Natural killer cell (primary cell): ENCODE measurements at regions of chr1 and their contacts with region 1.

Region 1: DNA sequence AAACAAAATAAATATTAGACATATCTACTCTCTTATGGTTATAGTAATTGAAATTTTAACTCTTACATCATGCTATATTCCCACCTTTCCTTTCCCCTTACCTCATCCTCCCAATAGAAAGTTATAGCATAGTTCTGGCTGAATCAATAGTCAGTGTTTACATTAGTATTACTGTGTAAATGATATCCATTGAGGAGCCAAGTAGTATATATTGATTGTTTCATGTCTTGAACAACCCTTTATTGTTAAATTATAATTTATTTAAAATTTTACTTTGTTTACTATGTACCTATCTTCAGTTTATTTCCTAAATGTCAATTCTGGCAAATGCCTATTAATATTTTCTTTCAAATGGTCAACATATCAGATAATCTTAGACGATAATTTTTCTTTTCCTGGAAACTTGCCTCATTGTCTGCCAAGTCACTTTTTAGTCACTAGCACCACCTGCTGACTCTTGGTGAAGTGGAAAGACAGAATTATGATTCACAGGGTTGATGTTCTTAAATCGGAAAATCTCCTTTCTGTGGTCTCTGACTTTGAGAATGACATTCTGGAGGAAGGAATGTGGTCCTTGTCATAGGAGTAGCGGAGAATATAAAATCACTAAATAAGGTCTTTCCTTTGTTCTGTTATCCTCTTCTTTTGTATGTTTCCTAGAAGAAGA is 8.7 kb downstream of the HJV start:
- DNase-seq: peak; percentile 31 to 87
- ATAC-seq: peak; percentile 74 to 86 (median 82)
- H3K4me3 ChIP-seq: no peak overlapping the region
- H3K4me3 Mint-ChIP-seq: no peak overlapping the region
- H3K27ac ChIP-seq: no peak overlapping the region
- H3K27ac Mint-ChIP-seq: no peak overlapping the region
- H3K4me1 ChIP-seq: peaks cover under 1% of the 10 kb centered on the region
- H3K4me1 Mint-ChIP-seq: peaks cover 0 to 6% of the 10 kb centered on the region in 2 donors
- H3K27me3 ChIP-seq: no peaks in the 10 kb centered on the region
- H3K27me3 Mint-ChIP-seq: peaks cover 5 to 13% of the 10 kb centered on the region in 2 donors
- CTCF ChIP-seq: peak; percentile 89

Region 2: DNA sequence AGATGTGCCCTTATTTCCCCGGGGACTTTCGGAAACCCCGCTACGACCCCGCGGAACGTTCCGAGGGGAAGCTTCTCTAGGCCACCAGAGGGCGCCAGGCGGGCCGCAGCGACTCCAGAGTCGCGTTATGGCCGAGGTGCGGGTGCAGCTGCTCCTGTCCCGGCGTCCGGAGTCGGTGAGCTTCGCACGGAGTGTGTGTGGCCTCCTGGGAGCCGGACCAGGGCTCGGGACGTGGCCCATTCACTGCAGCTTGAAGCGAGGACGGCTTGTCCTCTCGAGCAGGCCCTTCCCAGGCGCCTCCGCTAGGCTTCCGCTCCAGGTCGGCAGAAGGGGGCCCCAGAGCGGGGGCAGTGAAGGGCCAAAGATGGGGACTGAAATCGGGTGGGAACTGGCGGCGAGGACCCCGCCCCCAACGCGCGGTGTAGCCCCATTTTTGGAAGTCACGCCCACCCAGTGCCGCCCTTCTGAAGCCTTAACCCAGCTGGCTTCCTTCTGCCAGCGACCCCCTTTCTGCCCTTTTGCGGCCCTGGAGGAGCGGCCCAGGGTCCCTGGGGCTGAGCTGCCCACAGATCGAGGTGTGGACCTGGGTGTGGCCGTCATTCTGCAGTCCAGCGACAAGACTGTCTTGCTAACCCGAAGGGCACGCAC is 167.2 kb before region 1 on chr1 and contains the start of gene NUDT17:
- intact Hi-C with region 1: loop called (anchors 1 kb)
- DNase-seq: peak; percentile 74 to 88
- ATAC-seq: peak; percentile 86 to 89 (median 87)
- H3K4me3 ChIP-seq: peak within 1 kb of the TSS; percentile 68
- H3K4me3 Mint-ChIP-seq: no peak within 1 kb of the TSS
- H3K27ac ChIP-seq: peak within 1 kb of the TSS; percentile 44
- H3K27ac Mint-ChIP-seq: no peak within 1 kb of the TSS
- H3K4me1 ChIP-seq: peaks cover 20% of the 10 kb centered on the region
- H3K4me1 Mint-ChIP-seq: no peaks in the 10 kb centered on the region
- H3K27me3 ChIP-seq: no peaks in the 10 kb centered on the region
- H3K27me3 Mint-ChIP-seq: no peaks in the 10 kb centered on the region
- CTCF ChIP-seq: peak; percentile 88
- total RNA-seq, gene NUDT17: 3.3 to 4.9 (median 3.4) TPM

Region 3: DNA sequence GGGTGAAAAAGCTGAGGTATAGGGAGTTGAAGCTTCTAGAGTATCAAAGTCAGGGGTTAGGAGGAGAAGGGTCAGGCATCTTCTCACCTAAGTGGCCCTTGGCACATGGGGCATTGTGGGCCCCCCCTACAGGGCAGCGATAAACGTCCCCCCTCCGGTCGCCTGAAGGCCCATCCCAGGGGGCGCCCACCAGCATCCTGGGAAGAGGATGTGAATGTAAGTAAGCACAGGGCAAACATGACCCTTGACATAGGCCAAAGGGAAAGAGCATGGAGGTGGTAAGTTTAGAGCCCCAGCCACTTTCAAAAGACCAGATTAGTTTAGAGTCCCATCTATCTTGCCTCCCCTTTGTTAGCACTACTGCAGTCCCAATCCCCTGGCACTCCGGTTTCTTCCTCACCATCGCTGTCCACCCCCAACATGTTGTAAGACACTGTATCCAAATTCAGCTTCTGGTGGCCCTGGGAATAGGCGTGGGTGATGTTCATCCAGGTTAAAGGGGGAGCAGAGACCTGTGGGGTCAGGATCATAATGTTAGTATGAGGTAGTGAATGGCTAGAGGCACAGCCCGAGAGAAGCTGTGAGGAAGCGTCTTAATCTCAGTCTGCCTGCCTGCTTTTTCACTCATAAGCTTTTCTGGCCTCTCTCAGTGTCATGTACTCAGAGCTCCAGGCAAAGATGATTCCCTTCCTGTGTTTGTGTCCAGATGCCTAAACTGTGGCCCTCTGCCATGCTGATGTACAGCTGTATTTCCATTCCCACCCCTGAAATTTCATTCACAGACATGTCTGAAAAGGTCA is 105.7 kb before region 1 on chr1:
- intact Hi-C with region 1: loop called (anchors 2 kb)
- DNase-seq: no peak
- ATAC-seq: no peak
- H3K4me3 ChIP-seq: no peak overlapping the region
- H3K4me3 Mint-ChIP-seq: no peak overlapping the region
- H3K27ac ChIP-seq: no peak overlapping the region
- H3K27ac Mint-ChIP-seq: no peak overlapping the region
- H3K4me1 ChIP-seq: peaks cover 3% of the 10 kb centered on the region
- H3K4me1 Mint-ChIP-seq: peaks cover 0 to 5% of the 10 kb centered on the region in 2 donors
- H3K27me3 ChIP-seq: no peaks in the 10 kb centered on the region
- H3K27me3 Mint-ChIP-seq: no peaks in the 10 kb centered on the region
- CTCF ChIP-seq: no peak

Region 4: DNA sequence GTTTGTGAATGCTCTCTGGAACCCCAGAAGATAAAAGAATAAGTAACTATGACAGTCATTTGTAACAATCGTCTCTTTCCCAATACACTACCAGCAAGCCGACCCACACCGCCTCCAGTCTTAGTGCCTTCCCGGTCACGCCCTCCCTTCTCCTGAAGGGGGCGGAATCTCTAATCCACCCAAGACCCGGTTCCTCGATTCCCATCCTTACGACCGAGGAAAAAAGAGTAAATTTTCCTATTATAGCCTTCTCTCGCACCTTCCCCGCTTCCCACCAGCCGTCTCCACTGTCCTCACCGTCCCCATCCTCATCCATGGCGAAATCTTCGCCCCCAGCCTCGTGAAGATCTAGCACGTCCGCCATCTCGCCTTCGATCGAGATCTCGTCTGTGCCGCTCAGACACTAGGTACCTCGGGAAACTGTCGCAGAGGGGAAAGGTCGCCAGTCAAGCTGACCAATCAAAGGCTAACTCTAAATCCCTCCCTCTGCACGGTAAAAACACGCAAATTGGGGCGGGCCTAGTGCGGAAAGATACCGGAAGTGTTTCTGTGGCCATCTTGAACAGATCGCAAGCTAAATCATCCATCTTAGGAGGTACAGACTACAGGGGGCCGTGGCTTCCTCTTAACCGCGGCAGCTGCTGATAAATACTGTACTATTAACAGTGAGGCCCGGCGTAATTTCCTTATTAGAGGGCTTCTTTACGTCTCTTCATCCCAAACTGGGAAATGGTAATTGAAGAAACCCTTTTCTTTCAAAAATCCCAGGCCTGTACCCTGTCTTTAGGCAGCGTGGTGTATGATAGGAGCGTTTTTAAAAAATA is 85.6 kb before region 1 on chr1 and contains the start of gene RBM8A:
- intact Hi-C with region 1: loop called (anchors 5 kb)
- DNase-seq: peak; percentile 87 to 99
- ATAC-seq: peak; percentile 96 to 99 (median 96)
- H3K4me3 ChIP-seq: peak within 1 kb of the TSS; percentile 64
- H3K4me3 Mint-ChIP-seq: no peak within 1 kb of the TSS
- H3K27ac ChIP-seq: peak within 1 kb of the TSS; percentile 100
- H3K27ac Mint-ChIP-seq: no peak within 1 kb of the TSS
- H3K4me1 ChIP-seq: peaks cover 25% of the 10 kb centered on the region
- H3K4me1 Mint-ChIP-seq: peaks cover 14 to 20% of the 10 kb centered on the region in 2 donors
- H3K27me3 ChIP-seq: no peaks in the 10 kb centered on the region
- H3K27me3 Mint-ChIP-seq: no peaks in the 10 kb centered on the region
- CTCF ChIP-seq: peak; percentile 73
- total RNA-seq, gene RBM8A: 172 to 204 (median 200) TPM

Region 5: DNA sequence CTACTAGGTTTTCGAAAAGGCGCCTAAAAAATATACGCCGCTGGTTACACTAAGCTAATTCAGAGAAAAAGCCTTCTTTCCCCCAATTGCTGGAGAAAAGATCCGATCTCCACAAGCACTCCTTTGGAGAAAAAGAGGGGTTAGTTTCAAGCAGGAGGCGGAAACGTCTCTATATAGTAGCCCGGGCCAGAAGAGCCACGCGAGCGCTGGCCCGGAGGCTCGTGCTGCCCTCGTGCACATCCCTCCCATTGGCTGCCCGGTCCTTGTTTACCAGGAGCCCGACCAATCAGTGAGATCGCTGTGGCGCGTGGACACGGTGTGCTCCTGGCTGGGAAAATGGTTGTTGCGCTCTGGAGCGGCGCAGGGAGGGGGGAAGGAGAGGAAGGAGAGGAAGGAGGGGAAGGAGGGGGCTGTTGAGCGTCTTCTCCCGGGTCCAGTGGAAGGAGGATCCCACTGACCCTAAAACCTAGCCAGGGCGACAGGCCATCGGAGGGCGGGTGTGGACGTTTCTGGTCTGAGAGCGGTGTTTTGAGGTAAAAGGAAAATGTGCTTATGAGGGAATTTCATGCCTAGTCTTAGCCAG is 16.3 kb before region 1 on chr1 and contains the start of gene TXNIP:
- intact Hi-C with region 1: loop called (anchors 2 kb)
- DNase-seq: peak; percentile 91 to 95
- ATAC-seq: peak; percentile 85 to 97 (median 95)
- H3K4me3 ChIP-seq: peak within 1 kb of the TSS; percentile 64
- H3K4me3 Mint-ChIP-seq: peak within 1 kb of the TSS; percentile 97
- H3K27ac ChIP-seq: peak within 1 kb of the TSS; percentile 88
- H3K27ac Mint-ChIP-seq: peak within 1 kb of the TSS; percentile 97 to 99
- H3K4me1 ChIP-seq: peaks cover 48% of the 10 kb centered on the region
- H3K4me1 Mint-ChIP-seq: peaks cover 71 to 76% of the 10 kb centered on the region in 2 donors
- H3K27me3 ChIP-seq: no peaks in the 10 kb centered on the region
- H3K27me3 Mint-ChIP-seq: no peaks in the 10 kb centered on the region
- CTCF ChIP-seq: no peak
- total RNA-seq, gene TXNIP: 984 to 1,724 (median 1,422) TPM